ENCODE measurements at regions of chr6 and their contacts with region 1.

Region 1: GRCh38 chr6:56843573-56844349 is 111.1 kb upstream of the BEND6 start:
- ATAC-seq: peak; percentile 64 to 87 (median 84)
- H3K4me3 ChIP-seq: peak overlapping the region; percentile 71 to 99 (median 92)
- H3K27ac ChIP-seq: peak overlapping the region; percentile 81 to 92
- H3K4me1 ChIP-seq: peaks cover 9 to 22% of the 10 kb centered on the region in 2 donors

Region 2: GRCh38 chr6:56618050-56618449 is 225.7 kb before region 1 on chr6:
- in situ Hi-C with region 1: no loop called
- ATAC-seq: no peak
- H3K4me3 ChIP-seq: no peak overlapping the region
- H3K27ac ChIP-seq: no peak overlapping the region
- H3K4me1 ChIP-seq: peaks cover 0 to 4% of the 10 kb centered on the region in 2 donors

Region 3: GRCh38 chr6:56708810-56709597 is 134.8 kb before region 1 on chr6:
- in situ Hi-C with region 1: loop called in 3 of 9 experiments (anchors 25 kb)
- ATAC-seq: peak in 3 of 8 experiments; percentile 45 to 62 (median 48)
- H3K4me3 ChIP-seq: no peak overlapping the region
- H3K27ac ChIP-seq: no peak overlapping the region
- H3K4me1 ChIP-seq: peaks cover 3 to 4% of the 10 kb centered on the region in 2 donors

Region 4: DNA sequence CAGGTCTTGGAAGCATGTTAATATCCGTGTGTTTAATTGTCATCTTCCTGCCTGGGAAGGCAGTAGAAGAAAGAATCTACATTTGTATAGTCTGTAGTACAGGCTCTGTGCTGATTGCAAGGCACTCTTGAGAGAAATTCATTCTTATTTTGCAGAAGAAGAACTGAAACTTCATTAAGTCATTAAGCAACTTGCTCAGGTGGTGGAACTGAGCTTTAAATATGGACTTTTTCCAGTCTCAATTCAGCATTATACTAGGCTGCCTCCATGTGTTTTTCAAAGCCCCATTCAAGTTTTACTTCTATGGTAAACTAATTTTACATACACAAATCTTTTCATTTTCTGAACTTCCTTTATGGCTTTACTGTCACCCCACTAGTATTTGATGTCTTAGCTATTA is 264.9 kb after region 1 on chr6:
- in situ Hi-C with region 1: no loop called
- ATAC-seq: no peak
- H3K4me3 ChIP-seq: no peak overlapping the region
- H3K27ac ChIP-seq: no peak overlapping the region
- H3K4me1 ChIP-seq: peaks cover 0 to 3% of the 10 kb centered on the region in 2 donors